Activated naive CD4-positive, alpha-beta T cell treated with anti-CD3 and anti-CD28 coated beads for 36 hours (primary cell): ENCODE measurements at regions of chr21 and their contacts with region 1.

Region 1: GRCh38 chr21:32257962-32258785 is 20.7 kb downstream of the MIS18A start:
- DNase-seq: peak; percentile 63
- H3K4me3 Mint-ChIP-seq: no peak overlapping the region
- H3K27ac Mint-ChIP-seq: no peak overlapping the region
- H3K4me1 Mint-ChIP-seq: no peaks in the 10 kb centered on the region
- H3K27me3 Mint-ChIP-seq: no peaks in the 10 kb centered on the region

Region 2: GRCh38 chr21:31866077-31866511 is 392.1 kb before region 1 on chr21:
- CTCF ChIA-PET with region 1: interaction called, 20 read pairs
- intact Hi-C with region 1: loop called (anchors 1 kb)
- DNase-seq: peak; percentile 83
- H3K4me3 Mint-ChIP-seq: no peak overlapping the region
- H3K27ac Mint-ChIP-seq: no peak overlapping the region
- H3K4me1 Mint-ChIP-seq: no peaks in the 10 kb centered on the region
- H3K27me3 Mint-ChIP-seq: peaks cover 21% of the 10 kb centered on the region

Region 3: GRCh38 chr21:31991356-31992331 is 266.5 kb before region 1 on chr21:
- CTCF ChIA-PET with region 1: no interaction called
- intact Hi-C with region 1: loop called (anchors 10 kb)
- DNase-seq: no peak
- H3K4me3 Mint-ChIP-seq: no peak overlapping the region
- H3K27ac Mint-ChIP-seq: no peak overlapping the region
- H3K4me1 Mint-ChIP-seq: no peaks in the 10 kb centered on the region
- H3K27me3 Mint-ChIP-seq: peaks cover 3% of the 10 kb centered on the region

Region 4: DNA sequence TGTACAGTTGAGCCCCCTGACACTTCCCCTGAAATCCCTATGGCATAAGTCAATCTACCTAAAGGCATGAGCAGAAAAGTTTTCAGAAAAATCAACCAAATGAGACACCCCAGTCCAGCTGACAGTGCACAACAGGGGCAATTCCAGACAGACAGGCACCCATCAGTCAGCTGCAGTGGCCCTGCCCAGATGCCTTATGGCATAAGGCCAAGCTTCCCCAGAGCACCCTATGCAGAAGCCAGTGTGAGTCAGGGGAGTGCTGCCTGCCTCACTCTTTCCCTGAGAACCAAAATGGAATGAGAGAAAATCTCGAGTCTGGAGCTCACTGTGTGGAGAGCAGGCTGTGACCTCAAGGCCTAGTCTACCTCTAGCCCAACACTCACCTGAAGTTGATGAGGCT is 78.5 kb after region 1 on chr21:
- CTCF ChIA-PET with region 1: no interaction called
- intact Hi-C with region 1: no loop called
- DNase-seq: no peak
- H3K4me3 Mint-ChIP-seq: no peak overlapping the region
- H3K27ac Mint-ChIP-seq: no peak overlapping the region
- H3K4me1 Mint-ChIP-seq: no peaks in the 10 kb centered on the region
- H3K27me3 Mint-ChIP-seq: no peaks in the 10 kb centered on the region